Mucosa of descending colon (tissue), 3 donors: ENCODE measurements at regions of chr10 and their contacts with region 1.

Region 1: DNA sequence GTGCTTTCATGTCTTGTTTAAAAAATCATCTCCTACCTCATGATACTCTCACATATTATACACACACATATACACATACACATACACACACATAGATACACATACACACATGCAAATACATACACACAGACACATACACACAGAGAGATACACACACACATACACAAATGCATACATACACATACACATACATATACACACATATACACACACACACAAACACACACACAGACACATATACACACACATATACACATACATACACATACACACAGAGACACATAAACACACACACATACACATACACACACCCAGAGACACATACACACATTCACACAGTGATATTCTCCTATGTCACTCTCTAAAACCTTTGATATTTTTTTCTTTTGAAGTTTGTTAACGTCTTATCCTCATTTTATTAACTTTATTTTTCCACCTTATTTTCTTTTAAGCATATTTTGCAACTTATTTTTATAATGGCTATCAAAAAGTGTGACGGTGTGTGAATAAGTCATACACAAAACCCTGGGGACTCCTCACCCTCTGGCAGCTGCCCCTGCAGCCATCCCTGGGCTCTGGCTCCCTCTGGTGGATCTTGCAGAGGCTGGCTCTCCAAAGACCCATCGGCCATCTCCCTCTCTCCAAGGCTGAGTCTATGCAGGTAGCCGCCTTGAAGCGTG is 3.9 kb upstream of the C10orf120 start:
- DNase-seq: peak in 2 of 3 donors; percentile 67 to 76
- ATAC-seq: peak; percentile 86
- H3K4me3 ChIP-seq: no peak overlapping the region
- H3K4me1 ChIP-seq: no peaks in the 10 kb centered on the region
- CTCF ChIP-seq: peak; percentile 65

Region 2: GRCh38 chr10:122648599-122649428 is 54.8 kb before region 1 on chr10:
- intact Hi-C with region 1: loop called in 1 of 2 experiments (anchors 5 kb)
- DNase-seq: peak in 2 of 3 donors; percentile 35 to 63
- ATAC-seq: peak; percentile 72
- H3K4me3 ChIP-seq: no peak overlapping the region
- H3K4me1 ChIP-seq: no peaks in the 10 kb centered on the region
- CTCF ChIP-seq: peak; percentile 58

Region 3: DNA sequence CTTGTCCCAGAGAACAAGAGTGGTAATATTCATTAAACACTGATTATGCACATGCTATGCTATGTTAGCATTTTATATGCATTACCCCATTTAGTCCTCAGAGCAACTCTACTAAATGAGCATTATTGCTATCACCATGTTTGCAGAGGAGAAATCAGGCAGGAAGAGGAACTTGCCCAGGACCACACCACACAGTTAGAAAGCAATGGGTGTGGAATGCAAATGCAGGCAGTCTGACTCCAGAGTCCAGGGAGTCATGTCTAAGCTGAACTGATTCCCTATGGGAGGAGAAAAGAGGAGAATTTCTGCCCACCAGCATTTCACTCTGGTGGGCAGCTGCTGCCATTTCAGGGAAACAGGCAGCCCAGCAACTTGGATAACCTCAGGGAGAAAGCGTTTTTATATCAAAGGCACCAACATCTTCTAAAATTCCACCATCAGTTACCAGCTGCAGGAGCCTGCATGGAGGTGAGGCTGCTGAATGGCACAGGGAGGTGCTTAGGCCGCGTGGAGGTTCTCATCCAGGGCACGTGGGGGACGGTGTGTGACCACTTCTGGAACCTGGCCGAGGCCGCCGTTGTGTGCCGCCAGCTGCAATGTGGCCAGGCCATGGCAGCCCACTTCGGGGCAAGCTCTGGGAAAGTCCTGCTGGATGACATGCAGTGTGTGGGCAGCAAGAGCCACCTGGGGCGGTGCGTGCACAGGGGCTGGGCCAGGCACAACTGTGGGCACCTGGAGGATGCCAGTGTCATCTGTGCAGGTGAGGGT is 64.2 kb after region 1 on chr10:
- intact Hi-C with region 1: no loop called
- DNase-seq: peak in 1 of 3 donors; percentile 36
- ATAC-seq: no peak
- H3K4me3 ChIP-seq: no peak overlapping the region
- H3K4me1 ChIP-seq: no peaks in the 10 kb centered on the region
- CTCF ChIP-seq: no peak

Region 4: DNA sequence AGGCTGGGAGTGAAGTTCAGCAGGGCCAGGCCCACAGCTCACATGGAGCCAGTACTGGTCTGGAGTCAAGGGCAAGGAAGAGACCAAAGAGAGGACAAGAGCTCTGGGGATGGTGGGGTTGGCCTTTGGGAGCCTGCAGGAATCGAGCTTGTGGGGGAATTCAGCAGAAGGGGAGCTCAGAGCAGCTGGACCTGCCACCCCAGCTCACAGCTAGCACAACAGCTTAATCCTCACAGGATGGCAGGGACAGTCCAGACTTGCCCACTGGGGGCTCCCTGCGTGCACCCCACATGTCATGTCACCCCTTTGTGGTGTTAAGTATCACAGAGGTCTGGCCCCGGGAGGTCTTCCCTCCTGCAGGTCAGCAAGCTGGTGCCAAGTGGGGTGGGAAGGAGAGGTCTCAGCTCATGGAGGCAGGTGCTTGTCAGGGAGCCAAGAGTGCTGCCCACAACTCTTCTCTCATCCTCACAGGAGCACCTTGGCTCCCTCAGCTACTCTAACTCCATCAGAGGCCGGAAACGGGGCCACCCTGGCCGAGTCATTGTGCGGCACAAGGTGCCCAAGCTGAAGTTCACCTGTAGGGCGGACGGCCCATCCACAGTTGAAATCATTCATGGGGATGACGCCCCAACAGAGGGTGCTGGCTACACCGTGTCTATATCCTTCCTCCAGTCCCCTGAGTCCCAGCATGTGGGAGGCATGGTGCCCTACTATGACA is 119.6 kb after region 1 on chr10:
- intact Hi-C with region 1: no loop called
- DNase-seq: no peak
- ATAC-seq: no peak
- H3K4me3 ChIP-seq: no peak overlapping the region
- H3K4me1 ChIP-seq: no peaks in the 10 kb centered on the region
- CTCF ChIP-seq: no peak